CD4-positive, alpha-beta memory T cell (primary cell): ENCODE measurements at regions of chr3 and their contacts with region 1.

Region 1: DNA sequence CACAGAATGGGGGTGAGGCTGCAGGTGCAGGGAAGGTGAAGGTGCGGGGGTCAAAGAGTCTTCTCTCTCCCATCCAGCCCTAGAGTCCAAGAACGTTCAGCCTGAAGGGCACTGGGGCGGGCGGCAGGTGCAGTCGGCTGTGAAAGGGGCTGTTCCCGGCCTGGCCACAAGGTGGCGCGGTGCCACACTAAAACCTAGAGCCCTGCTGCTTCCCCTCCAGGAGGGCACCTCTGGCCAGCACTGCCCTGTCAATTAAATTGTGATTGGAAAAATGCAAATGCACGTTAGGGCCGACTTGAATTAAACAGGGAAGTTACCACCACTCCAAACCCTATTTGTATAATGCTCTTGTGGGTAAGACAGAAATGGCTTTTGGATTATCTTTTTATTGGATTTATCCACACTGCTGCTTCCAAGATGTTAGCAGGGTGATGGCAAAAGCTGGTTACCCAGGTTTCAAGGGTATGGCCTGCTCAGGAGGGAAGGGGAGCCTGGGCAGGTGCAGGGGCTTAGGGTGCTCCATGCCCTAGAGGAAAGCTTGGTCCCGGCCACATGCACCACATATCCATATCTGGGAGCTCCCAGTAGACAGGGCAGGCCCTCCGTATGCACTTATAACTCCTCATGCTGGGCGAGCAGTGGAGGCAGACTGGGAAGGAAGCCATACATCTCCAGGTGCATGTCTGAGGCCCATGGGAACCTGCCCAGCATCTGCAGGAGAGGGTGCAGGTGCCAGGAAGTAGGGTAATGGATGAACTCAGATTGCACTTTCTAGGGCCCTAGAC is 119.8 kb downstream of the ADCY5 start:
- DNase-seq: peak in 4 of 5 donors; percentile 56 to 62 (median 60)
- H3K4me3 ChIP-seq: no peak overlapping the region
- H3K4me3 Mint-ChIP-seq: no peak overlapping the region
- H3K27ac ChIP-seq: no peak overlapping the region
- H3K27ac Mint-ChIP-seq: no peak overlapping the region
- H3K4me1 ChIP-seq: no peaks in the 10 kb centered on the region
- H3K4me1 Mint-ChIP-seq: peaks cover 0 to 1% (median 0%) of the 10 kb centered on the region in 4 donors
- H3K27me3 ChIP-seq: no peaks in the 10 kb centered on the region
- H3K27me3 Mint-ChIP-seq: peaks cover 0 to 1% of the 10 kb centered on the region in 2 donors

Region 2: GRCh38 chr3:123272547-123272946 is 56.5 kb before region 1 on chr3:
- CTCF ChIA-PET with region 1: no interaction called
- POLR2A ChIA-PET with region 1: no interaction called
- intact Hi-C with region 1: no loop called
- DNase-seq: no peak
- H3K4me3 ChIP-seq: no peak overlapping the region
- H3K4me3 Mint-ChIP-seq: no peak overlapping the region
- H3K27ac ChIP-seq: no peak overlapping the region
- H3K27ac Mint-ChIP-seq: no peak overlapping the region
- H3K4me1 ChIP-seq: no peaks in the 10 kb centered on the region
- H3K4me1 Mint-ChIP-seq: peaks cover 0 to 4% (median under 1%) of the 10 kb centered on the region in 4 donors
- H3K27me3 ChIP-seq: no peaks in the 10 kb centered on the region
- H3K27me3 Mint-ChIP-seq: no peaks in the 10 kb centered on the region

Region 3: DNA sequence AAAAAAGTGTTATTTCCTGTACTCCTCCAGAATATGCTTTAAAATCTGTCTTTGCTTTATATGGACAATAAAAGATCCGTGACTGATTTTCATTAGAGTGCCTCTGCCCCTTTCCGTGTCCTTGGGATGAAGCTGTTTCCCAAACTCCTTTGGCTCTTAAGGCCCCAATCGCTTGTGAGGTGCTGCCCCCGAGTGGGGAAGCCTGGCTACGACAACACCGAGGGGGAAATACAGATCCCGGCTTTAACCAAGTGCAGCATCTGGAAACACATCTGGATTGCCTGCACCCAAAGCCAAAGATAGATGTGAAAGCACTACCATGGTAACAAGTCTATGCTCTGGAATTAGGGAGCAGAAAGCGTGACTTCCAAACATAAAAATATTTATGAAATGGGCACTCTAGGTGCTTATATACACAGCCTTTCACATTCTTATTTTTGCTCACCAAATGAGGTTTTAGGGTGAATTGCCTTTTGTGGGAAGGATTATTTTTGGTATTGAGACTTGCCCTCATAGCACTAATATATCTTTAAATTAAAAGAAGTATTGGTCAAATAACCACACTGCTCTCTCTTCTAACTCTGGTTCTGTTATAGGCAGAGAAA is 160.5 kb after region 1 on chr3:
- CTCF ChIA-PET with region 1: interaction called, 3 read pairs
- POLR2A ChIA-PET with region 1: no interaction called
- intact Hi-C with region 1: loop called (anchors 2 kb)
- DNase-seq: peak; percentile 11 to 43 (median 16)
- H3K4me3 ChIP-seq: no peak overlapping the region
- H3K4me3 Mint-ChIP-seq: no peak overlapping the region
- H3K27ac ChIP-seq: no peak overlapping the region
- H3K27ac Mint-ChIP-seq: no peak overlapping the region
- H3K4me1 ChIP-seq: no peaks in the 10 kb centered on the region
- H3K4me1 Mint-ChIP-seq: peaks cover 0 to 8% (median 2%) of the 10 kb centered on the region in 4 donors
- H3K27me3 ChIP-seq: no peaks in the 10 kb centered on the region
- H3K27me3 Mint-ChIP-seq: peaks cover 0 to 1% of the 10 kb centered on the region in 2 donors

Region 4: DNA sequence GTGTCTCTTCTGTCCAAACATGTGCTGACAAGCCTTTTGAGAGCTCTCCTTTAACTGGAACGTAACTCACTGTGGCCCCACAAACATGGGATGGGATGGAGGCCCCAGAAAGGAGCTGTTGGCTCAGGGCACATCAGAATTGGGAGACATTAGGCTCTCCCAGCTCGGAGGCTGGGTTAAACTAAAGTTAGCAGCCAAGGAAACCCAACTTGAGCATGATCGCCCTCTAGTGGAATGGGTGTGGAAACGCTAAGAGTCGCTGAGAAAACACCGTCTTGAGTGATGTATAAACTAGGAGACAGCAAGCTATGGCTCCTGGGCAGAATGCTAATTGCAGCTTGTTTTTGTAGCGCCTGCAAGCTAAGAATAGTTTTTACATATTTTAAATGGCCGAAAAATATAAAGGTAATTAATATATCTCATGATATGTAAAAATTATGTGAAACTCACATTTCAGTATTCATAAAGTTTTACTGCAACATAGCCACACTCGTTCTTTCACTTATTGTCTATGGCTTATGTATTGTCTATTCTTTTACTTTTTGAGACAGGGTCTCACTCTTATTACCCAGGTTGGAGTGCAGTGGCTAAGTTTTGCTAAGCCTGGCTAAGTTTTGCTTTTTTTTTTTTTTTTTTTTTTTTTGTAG is 394.6 kb after region 1 on chr3:
- CTCF ChIA-PET with region 1: interaction called, 6 read pairs
- POLR2A ChIA-PET with region 1: no interaction called
- intact Hi-C with region 1: loop called (anchors 2 kb)
- DNase-seq: peak in 4 of 5 donors; percentile 39 to 50 (median 44)
- H3K4me3 ChIP-seq: no peak overlapping the region
- H3K4me3 Mint-ChIP-seq: no peak overlapping the region
- H3K27ac ChIP-seq: no peak overlapping the region
- H3K27ac Mint-ChIP-seq: no peak overlapping the region
- H3K4me1 ChIP-seq: peaks cover 5% of the 10 kb centered on the region
- H3K4me1 Mint-ChIP-seq: peaks cover 0 to 1% (median 0%) of the 10 kb centered on the region in 4 donors
- H3K27me3 ChIP-seq: no peaks in the 10 kb centered on the region
- H3K27me3 Mint-ChIP-seq: peaks cover 8 to 12% of the 10 kb centered on the region in 2 donors